ENCODE measurements at regions of chr1 and their contacts with region 1.

Region 1: GRCh38 chr1:226335661-226336060 is 26.7 kb upstream of the LIN9 start:
- DNase-seq: no peak

Region 2: GRCh38 chr1:226355669-226356551 is 20.2 kb after region 1 on chr1:
- intact Hi-C with region 1: loop called in 1 of 2 experiments (anchors 1 kb)
- DNase-seq: no peak

Region 3: DNA sequence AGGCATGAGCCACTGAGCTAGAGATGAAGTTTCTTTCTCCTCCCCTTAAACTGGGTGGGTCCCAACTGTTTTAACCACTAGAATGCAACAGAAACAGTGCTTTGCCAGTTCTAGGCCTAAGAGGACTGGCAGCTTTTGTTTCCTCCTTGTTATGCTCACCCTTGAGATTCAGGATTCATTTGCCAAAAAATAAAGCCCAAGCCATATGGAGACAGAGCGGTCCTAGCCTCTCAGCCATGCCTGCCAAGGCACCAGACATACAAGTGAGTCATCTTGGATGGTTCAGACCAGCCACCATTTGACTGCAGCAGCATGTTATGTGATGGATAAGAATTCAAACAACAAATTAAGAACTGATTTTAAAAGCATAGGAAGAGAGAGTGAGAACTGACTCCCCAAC is 174.8 kb after region 1 on chr1:
- intact Hi-C with region 1: no loop called
- DNase-seq: no peak

Region 4: GRCh38 chr1:227816750-227817446 is 1481.2 kb after region 1 on chr1:
- intact Hi-C with region 1: no loop called
- DNase-seq: no peak